ENCODE measurements at regions of chrX and their contacts with region 1.

Region 1: DNA sequence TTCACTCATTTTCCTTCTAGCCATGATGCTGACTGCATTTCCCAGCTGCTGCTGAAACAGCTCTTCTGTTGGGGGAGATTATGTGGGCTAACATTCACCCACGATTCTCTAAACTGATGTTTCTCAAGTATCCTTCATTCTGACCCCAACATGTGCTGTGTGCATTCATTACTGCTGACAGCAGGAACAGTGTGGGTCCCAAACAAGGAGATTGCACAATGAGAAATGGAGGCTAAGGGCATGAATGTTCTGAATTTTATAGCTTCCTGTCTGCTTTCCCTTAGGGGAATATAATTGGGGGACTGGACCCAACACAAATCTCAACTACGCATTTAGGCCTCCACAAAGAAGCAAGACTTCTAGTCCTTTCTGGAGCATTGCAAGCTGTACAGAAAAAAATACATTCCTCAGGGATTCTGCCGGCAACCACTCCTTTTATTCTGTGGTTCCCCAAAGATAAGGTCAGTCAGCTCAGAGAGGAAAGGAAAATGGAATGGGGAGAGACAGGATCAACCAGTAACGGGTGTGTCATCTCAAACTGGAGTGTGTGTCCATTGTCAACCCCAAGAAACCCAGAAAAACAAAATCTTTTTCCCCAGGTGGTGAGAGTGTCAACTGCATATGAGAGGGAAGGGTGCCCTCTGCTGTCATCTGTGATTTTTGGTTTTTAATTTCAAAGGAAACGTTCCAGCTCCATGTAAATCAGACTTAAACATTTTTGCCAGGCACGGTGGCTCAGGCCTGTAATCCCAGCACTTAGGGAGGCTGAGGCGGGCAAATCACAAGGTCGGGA is 81.5 kb upstream of the EGFL6 start:
- DNase-seq: peak; percentile 19 to 47
- H3K4me3 ChIP-seq: no peak overlapping the region
- H3K27ac ChIP-seq: peak overlapping the region; percentile 75; the same call in 1 of the 2 replicates
- H3K4me1 ChIP-seq: peaks cover 0 to 2% (median 0%) of the 10 kb centered on the region in 4 experiments; a peak in 1 of 7 replicates
- H3K27me3 ChIP-seq: no peaks in the 10 kb centered on the region
- CTCF ChIP-seq: peak in 2 of 3 experiments; percentile 40 to 64; a peak in 3 of 4 replicates
- EP300 ChIP-seq: no peak
- POLR2A ChIP-seq: no peak
- RAD21 ChIP-seq: peak; percentile 87 to 88

Region 2: GRCh38 chrX:12946838-12947544 is 540.9 kb before region 1 on chrX:
- CTCF ChIA-PET with region 1: interaction called, 10 read pairs
- POLR2A ChIA-PET with region 1: no interaction called
- DNase-seq: peak; percentile 54 to 86
- H3K4me3 ChIP-seq: no peak overlapping the region
- H3K27ac ChIP-seq: peak overlapping the region; percentile 67; the same call in 1 of the 2 replicates
- H3K4me1 ChIP-seq: peaks cover 0 to 7% (median 5%) of the 10 kb centered on the region in 4 experiments; a peak in 5 of 7 replicates
- H3K27me3 ChIP-seq: no peaks in the 10 kb centered on the region
- CTCF ChIP-seq: peak; percentile 62 to 100 (median 90)
- EP300 ChIP-seq: 0 out of 3 replicates have a peak, but pooled peaks of 1 of the 2 experiments have one; percentile 15
- POLR2A ChIP-seq: no peak
- RAD21 ChIP-seq: peak; percentile 79 to 83

Measured in H1 (cell line).